HepG2 (cell line): ENCODE measurements at regions of chr14 and their contacts with region 1.

Region 1: DNA sequence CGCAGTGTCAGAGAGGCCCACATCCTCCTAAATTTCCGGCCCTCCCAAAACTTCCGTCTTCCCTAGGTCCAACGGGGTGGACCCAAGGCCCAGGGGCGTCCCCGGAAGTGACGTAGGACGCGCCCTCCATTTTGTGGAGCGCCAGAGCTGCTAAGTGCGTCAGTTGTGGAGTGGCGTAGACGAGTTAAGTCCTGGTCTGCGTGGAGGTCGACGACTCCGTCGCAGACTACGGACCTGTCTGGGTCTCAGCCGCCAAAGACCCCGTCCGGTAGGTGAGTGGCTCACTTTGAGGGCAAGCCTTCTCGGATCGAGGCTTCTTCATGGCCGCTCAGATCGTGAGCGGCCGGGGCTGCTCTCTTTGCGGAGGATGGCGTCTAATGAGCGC is at the start of gene SRSF5:
- DNase-seq: peak; percentile 94
- ATAC-seq: peak; percentile 92
- H3K4me3 ChIP-seq: peak within 1 kb of the TSS; percentile 96 to 99 (median 99)
- H3K27ac ChIP-seq: peak within 1 kb of the TSS; percentile 99
- H3K4me1 ChIP-seq: peaks cover 48% of the 10 kb centered on the region
- H3K27me3 ChIP-seq: no peaks in the 10 kb centered on the region; a peak in 1 of 5 replicates
- CTCF ChIP-seq: 0 out of 2 replicates have a peak, but pooled peaks have one; percentile 18
- EP300 ChIP-seq: 0 out of 4 replicates have a peak, but pooled peaks of 1 of the 2 experiments have one; percentile 30
- POLR2A ChIP-seq: peak; percentile 99 to 100
- RAD21 ChIP-seq: peak; percentile 25; the same call in 1 of the 2 replicates
- total RNA-seq, gene SRSF5: 277 and 333 TPM in 2 replicates

Region 2: DNA sequence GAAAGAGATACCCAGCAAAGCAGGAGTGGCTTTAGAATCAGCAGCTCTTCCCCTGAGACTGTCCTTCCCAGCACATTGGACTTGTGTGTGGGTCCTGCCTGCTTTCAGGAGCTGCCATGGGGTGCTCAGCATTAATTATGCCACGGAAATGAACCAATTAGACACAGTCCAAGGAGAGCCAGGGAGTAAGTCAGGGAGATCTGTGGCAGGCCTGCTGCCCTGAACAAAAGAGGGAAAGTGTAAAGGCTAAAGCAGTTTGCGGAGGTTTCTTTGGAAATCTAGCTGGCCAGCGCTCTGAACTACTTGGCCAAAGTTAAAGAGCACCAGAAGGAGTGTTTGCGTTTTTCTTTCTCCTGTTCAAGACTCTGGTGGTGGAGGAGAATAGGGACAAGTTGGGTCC is 65.7 kb before region 1 on chr14:
- CTCF ChIA-PET with region 1: no interaction called
- POLR2A ChIA-PET with region 1: no interaction called
- in situ Hi-C with region 1: no loop called
- intact Hi-C with region 1: no loop called
- DNase-seq: no peak
- ATAC-seq: no peak
- H3K4me3 ChIP-seq: no peak overlapping the region
- H3K27ac ChIP-seq: no peak overlapping the region
- H3K4me1 ChIP-seq: peaks cover 69% of the 10 kb centered on the region
- H3K27me3 ChIP-seq: no peaks in the 10 kb centered on the region
- CTCF ChIP-seq: no peak
- EP300 ChIP-seq: no peak
- POLR2A ChIP-seq: no peak
- RAD21 ChIP-seq: no peak

Region 3: DNA sequence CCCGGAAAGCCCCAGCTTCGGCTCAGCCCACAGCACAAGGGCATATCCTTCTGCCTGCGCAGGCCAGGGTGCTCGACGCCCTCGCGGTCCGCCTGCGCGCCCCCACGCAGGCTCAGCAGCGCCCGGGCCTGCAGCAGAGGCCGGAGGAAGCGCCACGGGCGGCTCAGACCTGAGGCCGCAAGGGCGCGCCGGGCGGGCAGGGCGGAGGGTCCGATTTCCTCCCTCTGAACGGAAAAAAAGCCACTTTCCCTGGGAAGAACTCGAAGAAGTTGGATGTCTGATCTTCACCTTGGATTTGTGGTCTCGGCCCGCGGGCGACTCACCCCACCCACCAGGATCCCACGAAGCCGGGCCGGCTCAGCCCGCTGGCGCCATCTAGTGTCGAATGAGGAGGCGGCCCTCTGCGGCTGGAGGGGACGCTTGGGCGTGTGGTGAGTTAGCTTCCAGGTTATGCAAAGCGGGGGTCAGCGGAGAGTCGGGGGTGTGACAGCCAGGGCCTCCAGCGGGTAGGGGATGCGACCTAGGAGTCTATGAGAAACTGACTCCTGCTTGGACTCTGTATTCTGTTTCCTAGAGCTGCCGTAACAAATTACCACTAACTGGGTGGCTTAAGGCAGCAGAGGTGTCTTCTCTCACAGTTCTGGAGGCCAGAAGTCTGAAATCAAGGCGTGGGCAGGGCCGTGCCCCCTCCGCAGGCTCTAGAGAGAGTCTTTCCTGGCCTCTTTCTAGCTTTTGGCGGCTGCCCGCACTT is 40.0 kb before region 1 on chr14:
- CTCF ChIA-PET with region 1: no interaction called
- POLR2A ChIA-PET with region 1: interaction called, 11 read pairs
- in situ Hi-C with region 1: no loop called
- intact Hi-C with region 1: no loop called
- DNase-seq: peak; percentile 39
- ATAC-seq: peak; percentile 92
- H3K4me3 ChIP-seq: peak overlapping the region; percentile 16 to 70 (median 44); a peak in 5 of 6 replicates
- H3K27ac ChIP-seq: no peak overlapping the region
- H3K4me1 ChIP-seq: peaks cover 35% of the 10 kb centered on the region
- H3K27me3 ChIP-seq: peaks cover 0 to 4% of the 10 kb centered on the region in 2 experiments; a peak in 4 of 5 replicates
- CTCF ChIP-seq: peak; percentile 98
- EP300 ChIP-seq: no peak
- POLR2A ChIP-seq: no peak
- RAD21 ChIP-seq: peak; percentile 97

Region 4: DNA sequence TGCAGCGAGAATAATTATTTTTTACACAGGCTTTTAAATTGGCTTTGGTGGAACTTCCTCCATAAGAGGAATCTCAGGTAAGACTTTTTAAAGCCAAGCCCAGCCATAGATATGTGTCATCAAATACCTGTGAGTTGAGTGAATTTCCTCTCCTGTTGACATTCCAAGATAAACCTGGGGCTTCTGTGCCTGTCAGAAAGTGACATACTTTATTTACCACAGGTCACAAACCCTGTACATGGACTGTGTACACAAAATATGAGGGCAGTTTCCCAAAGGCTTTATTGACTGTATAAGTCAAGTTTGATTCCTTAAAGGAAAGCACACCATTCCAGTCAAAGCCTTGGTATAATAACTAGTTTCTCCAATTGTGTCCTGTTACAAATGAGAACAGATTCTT is 25.9 kb before region 1 on chr14:
- CTCF ChIA-PET with region 1: no interaction called
- POLR2A ChIA-PET with region 1: no interaction called
- in situ Hi-C with region 1: no loop called
- intact Hi-C with region 1: no loop called
- DNase-seq: peak; percentile 49
- ATAC-seq: no peak
- H3K4me3 ChIP-seq: no peak overlapping the region
- H3K27ac ChIP-seq: no peak overlapping the region
- H3K4me1 ChIP-seq: peaks cover 30% of the 10 kb centered on the region
- H3K27me3 ChIP-seq: no peaks in the 10 kb centered on the region
- CTCF ChIP-seq: no peak
- EP300 ChIP-seq: peak in 1 of 2 experiments; percentile 62; a peak in 1 of 4 replicates
- POLR2A ChIP-seq: no peak
- RAD21 ChIP-seq: no peak

Region 5: DNA sequence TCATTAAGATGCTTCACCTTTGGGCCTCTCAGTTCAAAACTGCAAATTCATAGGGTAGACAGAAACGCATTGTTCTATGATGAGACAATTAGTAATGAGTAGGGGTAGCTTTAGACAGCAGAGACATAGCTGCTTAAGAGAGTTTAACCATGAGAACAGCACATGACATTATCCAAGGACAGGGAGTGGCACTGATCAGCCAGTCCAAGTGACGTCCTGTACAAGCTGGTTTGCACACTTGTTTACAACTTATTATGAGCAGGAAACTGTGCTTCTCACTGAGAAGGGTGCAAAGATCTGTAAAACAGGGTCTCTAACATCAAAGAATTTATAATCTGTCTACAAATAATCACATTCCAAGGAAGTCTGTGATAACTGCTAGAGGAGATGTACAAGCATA is 11.2 kb before region 1 on chr14:
- CTCF ChIA-PET with region 1: no interaction called
- POLR2A ChIA-PET with region 1: interaction called, 26 read pairs
- in situ Hi-C with region 1: no loop called
- intact Hi-C with region 1: no loop called
- DNase-seq: peak; percentile 29
- ATAC-seq: peak; percentile 68
- H3K4me3 ChIP-seq: no peak overlapping the region
- H3K27ac ChIP-seq: no peak overlapping the region
- H3K4me1 ChIP-seq: peaks cover 50% of the 10 kb centered on the region
- H3K27me3 ChIP-seq: no peaks in the 10 kb centered on the region; a peak in 1 of 5 replicates
- CTCF ChIP-seq: no peak
- EP300 ChIP-seq: peak in 1 of 2 experiments; percentile 24; a peak in 1 of 4 replicates
- POLR2A ChIP-seq: no peak
- RAD21 ChIP-seq: no peak

Region 6: DNA sequence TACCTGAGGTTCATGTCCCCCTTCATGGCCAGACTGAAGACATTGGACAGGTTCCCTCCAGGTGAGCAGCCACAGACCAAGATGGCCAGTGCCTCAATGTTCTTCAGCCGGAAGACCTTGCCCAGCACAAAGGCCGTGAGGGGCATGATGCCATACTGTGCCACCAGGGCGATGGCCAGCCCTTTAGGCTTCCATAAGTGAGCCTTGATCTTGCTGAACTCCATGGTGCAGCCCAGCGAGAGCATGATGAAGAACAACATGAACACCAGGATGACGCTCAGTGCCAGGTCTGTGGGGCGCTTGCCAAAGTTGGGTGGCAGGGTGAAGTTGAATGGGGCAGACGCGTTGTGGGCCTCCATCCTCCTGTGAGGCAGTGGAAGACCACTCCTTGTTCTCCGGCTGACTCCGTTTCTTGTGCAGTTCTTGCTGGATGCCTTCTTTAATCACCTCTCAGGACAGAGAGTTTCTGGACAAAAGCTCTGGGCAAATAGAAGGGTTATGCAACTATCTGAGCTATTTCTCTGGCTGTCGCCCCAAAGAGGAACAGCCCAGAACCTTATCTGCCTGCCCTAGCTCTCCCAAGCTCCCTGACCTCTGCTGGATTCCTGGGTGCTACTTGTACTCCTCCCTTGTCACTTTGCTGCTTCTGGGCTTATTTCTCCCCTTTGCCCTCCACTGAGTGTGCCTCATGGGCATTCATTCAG is 30.0 kb after region 1 on chr14 and contains the start of gene SLC10A1:
- CTCF ChIA-PET with region 1: no interaction called
- POLR2A ChIA-PET with region 1: interaction called, 17 read pairs
- in situ Hi-C with region 1: no loop called
- intact Hi-C with region 1: no loop called
- DNase-seq: peak; percentile 23
- ATAC-seq: peak; percentile 43
- H3K4me3 ChIP-seq: 0 out of 6 replicates have a peak within 1 kb of the TSS, but pooled peaks of 1 of the 3 experiments have one; percentile 9
- H3K27ac ChIP-seq: peak within 1 kb of the TSS; percentile 25
- H3K4me1 ChIP-seq: peaks cover 68% of the 10 kb centered on the region
- H3K27me3 ChIP-seq: no peaks in the 10 kb centered on the region
- CTCF ChIP-seq: no peak
- EP300 ChIP-seq: no peak
- POLR2A ChIP-seq: no peak
- RAD21 ChIP-seq: no peak
- total RNA-seq, gene SLC10A1: not detected in 2 replicates

Region 7: DNA sequence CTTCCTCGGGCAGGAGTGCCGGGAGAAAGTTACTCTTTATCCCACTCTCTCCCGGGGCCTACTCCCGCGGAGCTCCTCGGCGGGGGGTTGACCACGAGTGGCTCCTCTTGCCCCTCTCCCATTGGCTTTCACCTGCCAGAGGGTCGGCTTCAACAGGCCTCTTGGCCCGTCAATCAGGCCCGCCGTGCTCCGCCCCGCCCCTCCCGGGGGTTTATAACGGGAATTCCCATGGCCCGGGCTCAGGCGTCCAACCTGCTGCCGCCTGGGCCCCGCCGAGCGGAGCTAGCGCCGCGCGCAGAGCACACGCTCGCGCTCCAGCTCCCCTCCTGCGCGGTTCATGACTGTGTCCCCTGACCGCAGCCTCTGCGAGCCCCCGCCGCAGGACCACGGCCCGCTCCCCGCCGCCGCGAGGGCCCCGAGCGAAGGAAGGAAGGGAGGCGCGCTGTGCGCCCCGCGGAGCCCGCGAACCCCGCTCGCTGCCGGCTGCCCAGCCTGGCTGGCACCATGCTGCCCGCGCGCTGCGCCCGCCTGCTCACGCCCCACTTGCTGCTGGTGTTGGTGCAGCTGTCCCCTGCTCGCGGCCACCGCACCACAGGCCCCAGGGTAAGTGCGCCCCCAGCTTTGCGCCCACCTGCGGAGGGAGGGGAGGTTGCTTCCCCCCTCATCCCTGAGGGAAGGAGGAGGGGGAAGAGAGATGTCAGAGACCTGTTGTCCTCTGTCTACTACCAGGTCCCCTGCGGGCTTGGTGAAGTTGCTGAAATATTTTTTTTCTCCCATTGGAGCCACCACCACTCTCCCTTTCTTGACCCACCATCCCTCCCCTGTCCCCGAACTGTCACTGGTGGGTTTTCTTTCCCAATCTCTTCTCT is 112.4 kb after region 1 on chr14 and contains the start of gene SMOC1:
- CTCF ChIA-PET with region 1: no interaction called
- POLR2A ChIA-PET with region 1: interaction called, 11 read pairs
- in situ Hi-C with region 1: no loop called
- intact Hi-C with region 1: no loop called
- DNase-seq: peak; percentile 84
- ATAC-seq: peak; percentile 91
- H3K4me3 ChIP-seq: peak within 1 kb of the TSS; percentile 76 to 91 (median 90)
- H3K27ac ChIP-seq: peak within 1 kb of the TSS; percentile 71
- H3K4me1 ChIP-seq: peaks cover 68% of the 10 kb centered on the region
- H3K27me3 ChIP-seq: no peaks in the 10 kb centered on the region; a peak in 1 of 5 replicates
- CTCF ChIP-seq: peak; percentile 14
- EP300 ChIP-seq: 0 out of 4 replicates have a peak, but pooled peaks of 1 of the 2 experiments have one; percentile 12
- POLR2A ChIP-seq: peak; percentile 97 to 98
- RAD21 ChIP-seq: peak; percentile 65
- total RNA-seq, gene SMOC1: 7.3 and 17.8 TPM in 2 replicates